CD14-positive monocyte (primary cell): ENCODE measurements at regions of chr1 and their contacts with region 1.

Region 1: DNA sequence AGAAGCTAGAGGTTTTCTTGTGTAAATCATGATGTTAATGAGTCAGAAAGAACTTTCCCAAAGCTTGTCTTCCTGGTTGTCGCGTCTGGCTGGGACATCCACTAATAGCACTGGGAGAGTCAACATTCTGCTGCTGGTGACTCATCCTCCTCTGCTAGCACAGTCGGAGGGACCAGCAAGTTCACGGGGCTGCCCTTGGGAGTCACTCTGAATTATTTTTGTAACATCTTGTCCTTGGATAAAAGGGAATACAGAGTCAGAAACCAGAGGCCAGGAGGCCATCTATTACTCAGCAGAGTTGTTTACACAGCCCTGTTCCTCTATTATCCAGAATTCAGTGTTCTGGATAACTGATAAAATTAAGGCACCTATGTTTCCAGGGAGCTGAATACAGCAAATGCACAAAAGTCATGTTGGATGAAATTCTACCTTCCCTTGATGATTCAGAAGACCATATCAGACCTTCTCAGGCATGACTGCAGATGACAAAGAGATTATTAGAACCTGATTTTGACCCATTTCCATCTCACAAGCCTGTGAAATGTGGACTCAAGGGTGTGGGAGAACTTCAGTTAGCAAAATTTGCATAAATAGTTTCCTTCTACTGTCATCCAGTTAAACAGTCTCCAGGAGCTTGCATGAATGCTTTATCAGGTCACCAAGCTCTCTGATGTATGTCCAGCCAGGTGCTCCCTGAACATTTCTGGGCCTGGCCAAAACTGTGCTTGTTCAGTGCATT is 68.1 kb downstream of the JAK1 start:
- DNase-seq: peak; percentile 89 to 99 (median 97)
- H3K4me3 ChIP-seq: no peak overlapping the region
- H3K4me3 Mint-ChIP-seq: no peak overlapping the region
- H3K27ac ChIP-seq: peak overlapping the region in 1 of 2 donors; percentile 75
- H3K27ac Mint-ChIP-seq: peak overlapping the region in 6 of 7 donors; percentile 58 to 83 (median 76)
- H3K4me1 ChIP-seq: peaks cover 20 to 32% of the 10 kb centered on the region in 2 donors
- H3K4me1 Mint-ChIP-seq: peaks cover 62% of the 10 kb centered on the region
- H3K27me3 ChIP-seq: no peaks in the 10 kb centered on the region
- H3K27me3 Mint-ChIP-seq: peaks cover 0 to 2% (median 2%) of the 10 kb centered on the region in 3 donors
- CTCF ChIP-seq: no peak

Region 2: GRCh38 chr1:64933296-64934070 is 35.2 kb after region 1 on chr1:
- intact Hi-C with region 1: loop called (anchors 5 kb)
- DNase-seq: peak; percentile 89 to 97 (median 94)
- H3K4me3 ChIP-seq: peak overlapping the region in 2 of 3 experiments; percentile 8 to 48
- H3K4me3 Mint-ChIP-seq: peak overlapping the region; percentile 61 to 79
- H3K27ac ChIP-seq: peak overlapping the region; percentile 70 to 92
- H3K27ac Mint-ChIP-seq: peak overlapping the region; percentile 95 to 99 (median 98)
- H3K4me1 ChIP-seq: peaks cover 37 to 42% of the 10 kb centered on the region in 2 donors
- H3K4me1 Mint-ChIP-seq: peaks cover 54% of the 10 kb centered on the region
- H3K27me3 ChIP-seq: no peaks in the 10 kb centered on the region
- H3K27me3 Mint-ChIP-seq: peaks cover 0 to 3% (median 2%) of the 10 kb centered on the region in 3 donors
- CTCF ChIP-seq: no peak

Region 3: DNA sequence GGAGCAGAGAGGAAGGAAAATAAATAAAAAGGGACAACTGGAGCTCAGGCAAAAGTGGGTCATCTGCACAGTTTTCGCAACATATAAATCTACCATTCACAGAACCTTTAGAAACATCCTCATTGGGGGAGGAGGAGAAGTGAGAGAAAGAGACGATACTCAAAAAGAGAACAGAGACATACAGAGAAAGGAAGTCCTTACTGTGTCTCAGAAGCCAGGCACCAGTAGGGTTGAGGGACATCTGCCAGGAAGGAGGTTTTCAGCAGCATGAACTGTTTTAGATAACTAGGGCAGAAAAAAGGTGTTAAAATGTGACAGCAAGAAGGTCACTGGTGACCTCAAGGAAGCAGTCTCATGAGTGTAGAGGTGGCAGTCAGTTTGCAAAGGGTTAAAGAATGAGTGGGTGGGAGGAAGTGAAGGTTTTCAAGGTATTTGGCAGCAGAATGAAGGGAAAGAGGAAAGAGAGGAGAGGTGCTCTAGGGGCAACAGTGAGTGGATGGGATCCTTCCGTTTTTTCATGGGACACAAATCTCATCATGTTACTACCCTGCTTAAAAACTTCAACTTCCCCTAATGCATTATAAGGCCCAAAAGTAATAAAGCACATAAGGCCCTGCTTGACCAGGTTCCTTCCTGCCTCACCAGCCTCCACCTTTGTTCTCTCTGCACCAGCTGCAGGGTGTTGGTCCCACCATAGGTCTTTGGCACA is 58.6 kb after region 1 on chr1:
- intact Hi-C with region 1: loop called in 1 of 2 experiments (anchors 5 kb)
- DNase-seq: peak; percentile 42 to 72 (median 68)
- H3K4me3 ChIP-seq: peak overlapping the region in 1 of 3 experiments; percentile 50
- H3K4me3 Mint-ChIP-seq: no peak overlapping the region
- H3K27ac ChIP-seq: peak overlapping the region; percentile 52 to 87
- H3K27ac Mint-ChIP-seq: no peak overlapping the region
- H3K4me1 ChIP-seq: peaks cover 53 to 62% of the 10 kb centered on the region in 2 donors
- H3K4me1 Mint-ChIP-seq: peaks cover 46% of the 10 kb centered on the region
- H3K27me3 ChIP-seq: no peaks in the 10 kb centered on the region
- H3K27me3 Mint-ChIP-seq: peaks cover 0 to under 1% (median 0%) of the 10 kb centered on the region in 3 donors
- CTCF ChIP-seq: no peak